IMR-90 (cell line): ENCODE measurements at regions of chr2 and their contacts with region 1.

Region 1: DNA sequence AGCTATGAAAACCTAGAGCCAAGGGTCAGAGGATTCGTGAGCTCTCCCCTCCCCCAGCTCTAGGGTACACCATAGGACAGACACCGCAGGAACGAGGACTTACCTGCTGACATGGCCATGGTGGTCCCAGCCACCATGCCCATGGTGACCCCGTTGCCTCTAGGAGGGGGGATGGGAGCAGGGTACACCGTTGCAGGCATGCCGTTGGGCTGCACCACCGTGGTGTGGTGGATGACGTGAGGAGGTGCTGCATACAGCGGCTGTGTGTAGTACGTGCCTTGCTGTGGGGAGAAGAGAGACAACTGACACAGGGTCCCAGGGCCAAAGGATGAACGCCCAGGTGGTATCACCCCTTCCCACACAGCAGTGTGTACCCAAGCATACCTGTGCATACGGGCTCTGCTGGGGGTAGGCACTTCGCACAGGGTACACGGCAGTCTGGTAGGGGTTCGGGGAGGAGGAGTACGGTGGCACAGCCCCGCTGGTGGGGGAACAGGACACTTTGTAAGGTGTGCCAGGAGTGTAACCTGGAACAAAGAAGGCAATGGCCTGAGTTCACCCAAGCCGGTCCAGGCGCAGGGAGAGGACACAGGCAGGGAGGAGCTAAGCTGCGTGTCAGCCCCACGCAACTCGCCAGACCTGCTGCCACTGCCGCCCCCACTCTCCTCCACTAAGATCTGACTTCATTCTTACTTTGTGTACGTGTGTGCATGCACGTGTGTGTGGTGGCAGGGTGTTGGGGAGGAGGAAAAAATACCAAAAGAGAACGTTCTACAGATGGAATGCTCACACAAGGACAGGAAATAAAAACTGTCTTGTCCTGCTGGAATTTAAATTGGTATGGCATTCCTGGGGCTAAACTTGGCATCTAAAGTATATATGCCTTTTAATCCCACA is 37.8 kb downstream of the FAM168B start:
- DNase-seq: peak; percentile 75
- ATAC-seq: peak; percentile 85
- H3K4me3 ChIP-seq: no peak overlapping the region
- H3K27ac ChIP-seq: peak overlapping the region; percentile 75
- H3K4me1 ChIP-seq: peaks cover 19% of the 10 kb centered on the region
- H3K27me3 ChIP-seq: no peaks in the 10 kb centered on the region
- CTCF ChIP-seq: no peak
- POLR2A ChIP-seq: no peak
- RAD21 ChIP-seq: no peak

Region 2: DNA sequence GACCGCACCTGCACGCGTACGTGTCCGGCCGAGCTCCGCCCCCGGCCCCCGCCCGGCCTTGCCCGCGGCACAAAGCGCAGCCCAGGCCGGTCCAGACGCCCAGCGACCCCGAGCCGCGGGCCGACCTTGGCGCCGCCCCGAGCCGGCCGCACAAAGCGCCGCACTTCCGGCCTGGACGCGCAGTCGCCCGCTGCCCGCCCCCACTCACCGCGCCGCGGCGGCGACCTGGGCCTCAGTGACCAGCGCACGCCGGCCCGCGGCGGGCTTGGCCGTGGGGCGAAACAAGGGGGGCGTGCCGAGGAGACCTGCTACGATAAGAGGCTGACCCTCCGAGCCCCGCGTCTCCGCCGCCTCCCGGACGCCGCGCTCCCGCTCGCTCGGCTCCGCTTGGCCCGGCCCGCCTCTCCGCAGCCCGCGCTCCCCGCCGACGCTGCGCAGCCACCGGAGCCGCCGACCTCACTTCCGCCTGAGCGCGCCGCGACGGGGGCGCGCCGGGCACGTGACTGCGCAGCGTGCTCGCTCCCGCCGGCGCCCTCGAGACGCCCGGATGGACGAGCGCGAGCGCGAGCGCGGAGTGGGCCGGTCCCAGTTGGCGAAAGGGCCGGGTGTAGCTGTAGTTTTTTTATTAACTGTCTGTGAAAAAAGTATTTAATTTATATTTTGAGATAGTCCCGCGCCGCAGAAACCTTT is 37.7 kb after region 1 on chr2 and contains the start of gene FAM168B:
- CTCF ChIA-PET with region 1: no interaction called
- POLR2A ChIA-PET with region 1: interaction called, 3 read pairs
- dilution Hi-C with region 1: no loop called
- in situ Hi-C with region 1: no loop called
- intact Hi-C with region 1: loop called (anchors 5 kb)
- DNase-seq: peak; percentile 88
- ATAC-seq: peak; percentile 91
- H3K4me3 ChIP-seq: peak within 1 kb of the TSS; percentile 89
- H3K27ac ChIP-seq: peak within 1 kb of the TSS; percentile 96
- H3K4me1 ChIP-seq: no peaks in the 10 kb centered on the region
- H3K27me3 ChIP-seq: no peaks in the 10 kb centered on the region
- CTCF ChIP-seq: no peak
- POLR2A ChIP-seq: peak; percentile 93
- RAD21 ChIP-seq: no peak
- total RNA-seq, gene FAM168B: 76.4 and 86.7 TPM in 2 replicates